CD8-positive, alpha-beta T cell (primary cell): ENCODE measurements at regions of chr11 and their contacts with region 1.

Region 1: DNA sequence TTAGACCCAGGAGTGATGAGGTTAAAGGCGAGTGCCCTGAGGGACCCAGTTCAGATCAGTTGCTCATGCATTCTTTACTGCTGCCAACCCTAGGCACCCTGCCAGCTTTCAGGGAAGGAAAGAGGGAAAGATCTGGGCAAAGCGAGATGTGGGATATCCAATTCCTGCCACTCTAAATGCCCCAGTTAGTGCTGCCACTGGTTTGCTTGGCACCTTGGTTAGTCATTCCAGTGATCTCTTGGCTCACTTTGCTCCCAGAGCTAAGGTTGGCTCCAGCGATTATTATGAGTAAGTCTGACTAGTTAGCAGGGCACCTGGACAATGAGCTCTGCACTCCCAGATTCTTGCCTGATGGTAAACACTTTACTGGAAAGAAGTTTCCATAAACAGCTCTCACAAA is 85.0 kb downstream of the INSC start:
- DNase-seq: no peak
- ATAC-seq: no peak
- H3K4me3 ChIP-seq: no peak overlapping the region
- H3K4me3 Mint-ChIP-seq: no peak overlapping the region
- H3K27ac ChIP-seq: no peak overlapping the region
- H3K27ac Mint-ChIP-seq: no peak overlapping the region
- H3K4me1 ChIP-seq: no peaks in the 10 kb centered on the region
- H3K4me1 Mint-ChIP-seq: no peaks in the 10 kb centered on the region
- H3K27me3 ChIP-seq: no peaks in the 10 kb centered on the region
- H3K27me3 Mint-ChIP-seq: peaks cover 3% of the 10 kb centered on the region
- CTCF ChIP-seq: no peak

Region 2: GRCh38 chr11:14619603-14620531 is 579.8 kb before region 1 on chr11:
- CTCF ChIA-PET with region 1: no interaction called
- POLR2A ChIA-PET with region 1: no interaction called
- intact Hi-C with region 1: loop called in 1 of 2 experiments (anchors 5 kb)
- DNase-seq: no peak
- ATAC-seq: no peak
- H3K4me3 ChIP-seq: no peak overlapping the region
- H3K4me3 Mint-ChIP-seq: no peak overlapping the region
- H3K27ac ChIP-seq: no peak overlapping the region
- H3K27ac Mint-ChIP-seq: peak overlapping the region; percentile 61
- H3K4me1 ChIP-seq: peaks cover 33% of the 10 kb centered on the region
- H3K4me1 Mint-ChIP-seq: peaks cover 84% of the 10 kb centered on the region
- H3K27me3 ChIP-seq: no peaks in the 10 kb centered on the region
- H3K27me3 Mint-ChIP-seq: no peaks in the 10 kb centered on the region
- CTCF ChIP-seq: no peak